ENCODE measurements at regions of chr11 and their contacts with region 1.

Region 1: DNA sequence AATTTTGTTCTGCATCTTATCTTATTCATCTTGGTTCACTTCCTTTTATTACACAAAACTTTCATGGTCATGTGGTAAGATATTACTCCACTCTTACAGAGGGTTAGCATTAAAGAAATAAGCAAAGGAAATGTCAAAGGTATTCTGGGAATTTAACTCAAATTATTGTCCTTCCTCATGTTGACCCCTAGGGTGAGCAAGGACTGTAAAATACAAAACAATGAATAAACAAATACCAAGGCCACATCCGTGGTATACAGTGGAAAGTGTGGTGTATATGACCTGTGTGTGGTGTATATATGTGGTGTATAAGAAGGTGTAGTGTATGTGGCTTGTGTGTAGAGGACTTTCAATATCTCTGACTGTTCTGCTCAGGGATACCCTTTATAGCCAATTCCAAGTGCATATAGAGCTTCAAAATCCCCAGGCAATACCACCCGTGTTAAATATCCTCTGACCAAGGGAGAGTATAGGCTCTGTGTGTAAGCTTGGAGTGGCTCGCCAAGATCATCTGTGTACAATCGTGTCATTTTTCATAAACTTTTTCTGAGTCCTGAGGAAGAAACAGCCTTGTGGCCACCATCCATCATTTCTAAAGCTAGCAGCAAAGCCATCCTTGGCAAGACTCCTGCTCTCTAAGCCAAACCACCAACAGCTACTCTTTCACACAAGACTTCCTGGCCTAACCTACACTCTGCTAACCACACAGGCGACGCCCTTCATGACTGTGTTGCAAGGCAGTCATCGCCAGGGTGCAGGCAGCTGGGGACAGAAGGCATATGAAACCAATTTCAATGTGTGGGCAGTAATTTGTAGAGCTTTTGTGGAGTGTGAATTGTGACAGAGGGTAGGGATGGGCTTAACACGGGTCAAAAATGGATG is 548.0 kb downstream of the ETS1 start:
- DNase-seq: peak; percentile 82
- ATAC-seq: peak; percentile 77
- H3K4me3 ChIP-seq: no peak overlapping the region
- H3K27ac ChIP-seq: no peak overlapping the region
- H3K4me1 ChIP-seq: peaks cover 13% of the 10 kb centered on the region
- H3K27me3 ChIP-seq: peaks cover 3% of the 10 kb centered on the region; the same call in 1 of the 2 replicates
- CTCF ChIP-seq: 0 out of 2 replicates have a peak, but pooled peaks have one; percentile 5
- POLR2A ChIP-seq: no peak
- RAD21 ChIP-seq: no peak

Region 2: GRCh38 chr11:126440792-126441514 is 1598.4 kb before region 1 on chr11:
- CTCF ChIA-PET with region 1: no interaction called
- POLR2A ChIA-PET with region 1: no interaction called
- dilution Hi-C with region 1: no loop called
- in situ Hi-C with region 1: loop called (anchors 25 kb)
- intact Hi-C with region 1: no loop called
- DNase-seq: peak; percentile 59
- ATAC-seq: peak; percentile 96
- H3K4me3 ChIP-seq: no peak overlapping the region
- H3K27ac ChIP-seq: no peak overlapping the region
- H3K4me1 ChIP-seq: no peaks in the 10 kb centered on the region
- H3K27me3 ChIP-seq: no peaks in the 10 kb centered on the region; the same call in 1 of the 2 replicates
- CTCF ChIP-seq: peak; percentile 96
- POLR2A ChIP-seq: no peak
- RAD21 ChIP-seq: peak; percentile 97

Region 3: GRCh38 chr11:128164080-128164741 is 124.8 kb after region 1 on chr11:
- CTCF ChIA-PET with region 1: interaction called, 3 read pairs
- POLR2A ChIA-PET with region 1: no interaction called
- dilution Hi-C with region 1: no loop called
- in situ Hi-C with region 1: loop called (anchors 5 kb)
- intact Hi-C with region 1: no loop called
- DNase-seq: no peak
- ATAC-seq: no peak
- H3K4me3 ChIP-seq: no peak overlapping the region
- H3K27ac ChIP-seq: no peak overlapping the region
- H3K4me1 ChIP-seq: no peaks in the 10 kb centered on the region
- H3K27me3 ChIP-seq: peaks cover 16% of the 10 kb centered on the region
- CTCF ChIP-seq: no peak
- POLR2A ChIP-seq: no peak
- RAD21 ChIP-seq: no peak

Region 4: DNA sequence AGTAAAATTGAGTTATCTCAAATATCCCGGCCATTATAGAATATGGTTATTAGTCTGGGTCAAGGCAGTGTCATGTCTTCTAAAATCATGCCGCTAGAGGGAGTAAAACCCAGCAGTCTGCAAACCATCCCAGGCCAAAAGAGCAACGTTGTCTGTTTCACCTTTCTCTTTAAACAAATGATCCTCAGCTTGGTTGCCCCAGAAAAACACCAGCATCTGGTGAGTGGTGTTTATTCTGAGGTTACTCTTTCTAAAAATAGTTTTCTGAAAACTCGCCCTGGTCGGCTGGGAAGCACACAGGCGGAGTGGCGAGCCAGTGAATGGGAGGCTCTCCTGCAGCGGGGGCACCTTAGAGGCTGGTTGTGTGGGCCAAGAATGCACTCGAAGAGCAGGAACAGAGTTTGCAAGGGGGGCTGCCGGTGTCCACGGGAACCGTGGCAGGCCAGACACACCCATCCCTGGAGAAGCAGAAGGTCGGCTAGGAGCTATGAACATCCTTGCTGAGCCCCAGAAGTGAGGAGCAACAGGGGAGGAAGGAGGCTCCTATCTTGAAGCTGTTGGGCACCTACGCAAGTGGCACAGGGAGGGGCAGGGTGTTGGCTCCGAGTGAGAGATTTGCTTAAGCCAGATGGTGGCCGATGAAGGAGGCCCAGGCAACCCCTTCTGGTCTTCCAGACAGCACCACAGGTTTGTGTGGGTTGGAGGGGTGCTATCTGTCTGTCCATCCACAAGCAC is 250.9 kb after region 1 on chr11:
- CTCF ChIA-PET with region 1: no interaction called
- POLR2A ChIA-PET with region 1: no interaction called
- dilution Hi-C with region 1: no loop called
- in situ Hi-C with region 1: loop called (anchors 10 kb)
- intact Hi-C with region 1: loop called (anchors 5 kb)
- DNase-seq: peak; percentile 95
- ATAC-seq: peak; percentile 95
- H3K4me3 ChIP-seq: no peak overlapping the region
- H3K27ac ChIP-seq: no peak overlapping the region
- H3K4me1 ChIP-seq: peaks cover 14% of the 10 kb centered on the region
- H3K27me3 ChIP-seq: peaks cover 1% of the 10 kb centered on the region; the same call in 1 of the 2 replicates
- CTCF ChIP-seq: peak; percentile 89
- POLR2A ChIP-seq: peak; percentile 46; the same call in 1 of the 2 replicates
- RAD21 ChIP-seq: peak; percentile 99

Region 5: DNA sequence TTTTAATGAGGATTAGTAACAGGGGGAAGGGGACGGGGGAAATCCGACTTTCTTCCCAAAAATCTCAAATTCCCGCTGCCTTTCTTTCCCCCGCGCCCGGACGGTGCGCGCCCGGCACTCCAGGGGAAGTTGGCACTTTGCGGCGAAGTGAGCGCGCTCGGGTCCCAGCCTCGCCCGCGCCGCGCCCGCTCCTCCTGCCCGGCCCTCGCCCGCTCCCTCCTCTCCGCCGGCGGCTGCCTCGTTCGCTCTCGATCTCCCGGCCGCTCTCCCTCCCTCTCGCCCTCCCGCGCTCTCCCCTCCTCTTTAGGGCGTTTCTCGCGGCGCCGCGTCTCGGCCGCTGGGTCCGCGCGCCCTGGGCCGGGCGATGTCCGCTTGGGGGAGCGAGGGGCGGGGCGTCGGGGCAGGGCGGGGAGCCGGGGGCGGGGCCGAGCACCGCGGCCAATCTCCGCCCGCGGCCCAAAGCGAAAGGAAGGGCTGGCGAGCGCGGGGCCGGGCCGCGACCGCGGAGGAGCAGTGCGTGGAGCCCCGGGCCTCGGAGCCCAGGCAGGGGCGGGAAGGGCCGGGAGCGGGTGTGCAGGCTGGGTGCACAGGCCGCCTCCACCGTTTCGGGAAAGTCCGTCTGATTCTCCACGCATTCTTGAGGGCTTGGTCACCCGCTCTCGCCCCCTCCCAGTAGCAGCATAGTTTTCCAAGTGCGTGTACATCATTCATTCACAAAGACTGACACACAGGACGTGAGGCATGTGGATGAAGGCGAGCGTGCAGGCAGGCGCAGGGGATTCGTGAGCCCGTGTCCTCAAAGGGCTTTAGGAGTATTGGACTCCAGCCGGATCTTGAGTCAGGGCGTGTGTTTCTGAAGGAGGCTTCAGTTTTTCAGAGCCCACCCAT is 482.9 kb after region 1 on chr11:
- CTCF ChIA-PET with region 1: no interaction called
- POLR2A ChIA-PET with region 1: no interaction called
- dilution Hi-C with region 1: no loop called
- in situ Hi-C with region 1: loop called (anchors 25 kb)
- intact Hi-C with region 1: no loop called
- DNase-seq: peak; percentile 100
- ATAC-seq: peak; percentile 90
- H3K4me3 ChIP-seq: peak overlapping the region; percentile 99
- H3K27ac ChIP-seq: peak overlapping the region; percentile 98
- H3K4me1 ChIP-seq: peaks cover 26% of the 10 kb centered on the region
- H3K27me3 ChIP-seq: no peaks in the 10 kb centered on the region
- CTCF ChIP-seq: no peak
- POLR2A ChIP-seq: peak; percentile 96
- RAD21 ChIP-seq: peak; percentile 27

Region 6: GRCh38 chr11:128824191-128825049 is 785.0 kb after region 1 on chr11:
- CTCF ChIA-PET with region 1: no interaction called
- POLR2A ChIA-PET with region 1: no interaction called
- dilution Hi-C with region 1: no loop called
- in situ Hi-C with region 1: loop called (anchors 10 kb)
- intact Hi-C with region 1: no loop called
- DNase-seq: no peak
- ATAC-seq: peak; percentile 66
- H3K4me3 ChIP-seq: no peak overlapping the region
- H3K27ac ChIP-seq: no peak overlapping the region
- H3K4me1 ChIP-seq: no peaks in the 10 kb centered on the region
- H3K27me3 ChIP-seq: no peaks in the 10 kb centered on the region
- CTCF ChIP-seq: no peak
- POLR2A ChIP-seq: no peak
- RAD21 ChIP-seq: no peak